K562 (cell line): ENCODE measurements at regions of chr7 and their contacts with region 1.

Region 1: DNA sequence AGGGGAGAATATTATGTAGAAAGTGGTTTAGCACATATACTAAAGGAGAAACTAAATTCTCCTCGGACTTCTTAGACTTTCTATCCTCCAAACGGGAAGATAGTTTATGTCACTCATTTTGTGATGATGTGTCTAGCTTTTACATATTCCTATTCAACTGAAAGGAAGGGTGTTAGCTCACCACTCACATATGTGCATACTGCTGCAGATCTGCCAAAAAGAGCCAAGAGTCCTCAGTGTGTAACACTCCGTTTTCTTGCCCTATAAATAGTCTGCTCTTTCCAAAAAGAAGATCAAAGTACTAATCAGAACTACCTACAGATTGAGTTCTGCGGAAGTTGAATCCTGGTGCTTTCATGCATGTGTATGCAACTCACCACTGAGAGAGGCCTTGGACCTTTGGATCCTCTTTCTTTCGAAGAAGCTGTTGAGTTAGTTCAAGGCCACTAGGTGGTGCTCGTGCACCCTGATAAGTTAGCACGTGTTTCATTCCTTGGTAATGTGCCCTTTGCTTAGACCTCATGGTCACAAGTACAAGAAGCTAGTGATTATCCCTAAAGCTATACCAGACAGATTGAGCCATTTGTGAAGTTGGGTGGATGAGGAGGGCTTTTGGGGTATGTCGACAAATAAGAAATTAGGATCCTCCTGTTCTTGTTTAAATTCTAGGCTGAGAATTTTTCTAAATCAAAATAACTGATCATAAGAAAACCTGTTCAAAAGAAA is 14.1 kb downstream of the YAE1 start:
- DNase-seq: peak; percentile 78 to 94 (median 79)
- ATAC-seq: peak; percentile 97
- H3K4me3 ChIP-seq: no peak overlapping the region
- H3K27ac ChIP-seq: no peak overlapping the region
- H3K4me1 ChIP-seq: peaks cover 0 to 2% of the 10 kb centered on the region in 2 experiments; a peak in 2 of 5 replicates
- H3K27me3 ChIP-seq: no peaks in the 10 kb centered on the region
- CTCF ChIP-seq: peak; percentile 77 to 95 (median 90)
- EP300 ChIP-seq: no peak
- POLR2A ChIP-seq: no peak
- RAD21 ChIP-seq: peak; percentile 96 to 99

Region 2: DNA sequence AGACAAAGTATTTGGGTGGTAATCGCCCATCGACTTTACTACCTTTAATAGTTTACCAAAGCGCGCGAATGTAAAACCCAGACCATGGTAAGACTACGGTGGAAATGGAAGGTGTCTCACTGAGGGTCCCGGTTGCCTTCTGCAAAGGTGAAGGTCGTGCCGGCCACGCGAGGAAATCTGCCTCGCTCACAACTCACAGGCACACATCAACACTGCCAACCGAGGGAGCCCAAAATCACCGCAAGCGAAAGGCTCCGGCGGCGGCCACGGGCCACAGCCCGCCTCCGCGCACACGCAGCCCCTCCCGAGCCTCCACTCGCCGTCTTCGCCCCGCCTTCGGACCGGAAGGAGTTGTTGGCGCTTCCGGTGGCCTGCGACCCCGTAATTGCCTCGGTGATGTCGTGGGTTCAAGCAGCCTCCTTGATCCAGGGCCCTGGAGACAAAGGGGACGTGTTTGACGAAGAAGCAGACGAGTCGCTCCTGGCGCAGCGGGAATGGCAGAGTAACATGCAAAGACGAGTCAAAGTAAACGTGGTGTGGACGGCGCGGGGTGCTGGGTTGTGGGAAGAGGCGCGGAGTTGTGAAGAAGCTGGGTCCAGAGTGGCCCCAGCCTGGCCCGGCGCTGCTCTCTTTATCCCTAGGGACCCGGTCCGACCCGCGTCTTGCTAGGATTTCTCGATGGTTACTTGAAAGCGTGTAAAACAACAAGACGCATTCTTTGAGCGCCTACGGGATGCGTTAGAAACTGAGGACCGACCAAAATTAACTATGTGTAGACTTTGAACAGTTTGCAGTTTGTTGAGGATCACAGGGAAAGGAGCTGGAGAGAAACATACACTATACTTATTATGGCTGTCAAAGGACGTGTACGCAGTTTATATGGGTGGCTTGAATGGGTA is 14.0 kb before region 1 on chr7 and contains the start of gene YAE1:
- CTCF ChIA-PET with region 1: no interaction called
- POLR2A ChIA-PET with region 1: interaction called, 12 read pairs
- in situ Hi-C with region 1: no loop called
- intact Hi-C with region 1: no loop called
- DNase-seq: peak; percentile 89 to 93 (median 91)
- ATAC-seq: peak; percentile 98
- H3K4me3 ChIP-seq: peak within 1 kb of the TSS; percentile 67
- H3K27ac ChIP-seq: peak within 1 kb of the TSS; percentile 85
- H3K4me1 ChIP-seq: peaks cover 0 to 2% of the 10 kb centered on the region in 2 experiments; a peak in 3 of 5 replicates
- H3K27me3 ChIP-seq: no peaks in the 10 kb centered on the region
- CTCF ChIP-seq: no peak
- EP300 ChIP-seq: 0 out of 2 replicates have a peak, but pooled peaks have one; percentile 6
- POLR2A ChIP-seq: peak; percentile 96
- RAD21 ChIP-seq: no peak
- polyA plus RNA-seq, gene YAE1: 60.6 to 63.4 TPM

Region 3: GRCh38 chr7:39746103-39746819 is 165.9 kb after region 1 on chr7:
- CTCF ChIA-PET with region 1: interaction called, 47 read pairs
- POLR2A ChIA-PET with region 1: interaction called, 13 read pairs
- in situ Hi-C with region 1: loop called (anchors 5 kb)
- intact Hi-C with region 1: loop called (anchors 1 kb)
- DNase-seq: peak; percentile 52 to 77 (median 66)
- ATAC-seq: peak; percentile 85
- H3K4me3 ChIP-seq: no peak overlapping the region
- H3K27ac ChIP-seq: no peak overlapping the region
- H3K4me1 ChIP-seq: no peaks in the 10 kb centered on the region
- H3K27me3 ChIP-seq: peaks cover 0 to 4% of the 10 kb centered on the region in 2 experiments; a peak in 1 of 5 replicates
- CTCF ChIP-seq: peak; percentile 76 to 91 (median 83)
- EP300 ChIP-seq: no peak
- POLR2A ChIP-seq: no peak
- RAD21 ChIP-seq: peak; percentile 87 to 91